Left ventricle myocardium inferior (tissue), 1 donor: ENCODE measurements at regions of chrX and their contacts with region 1.

Region 1: DNA sequence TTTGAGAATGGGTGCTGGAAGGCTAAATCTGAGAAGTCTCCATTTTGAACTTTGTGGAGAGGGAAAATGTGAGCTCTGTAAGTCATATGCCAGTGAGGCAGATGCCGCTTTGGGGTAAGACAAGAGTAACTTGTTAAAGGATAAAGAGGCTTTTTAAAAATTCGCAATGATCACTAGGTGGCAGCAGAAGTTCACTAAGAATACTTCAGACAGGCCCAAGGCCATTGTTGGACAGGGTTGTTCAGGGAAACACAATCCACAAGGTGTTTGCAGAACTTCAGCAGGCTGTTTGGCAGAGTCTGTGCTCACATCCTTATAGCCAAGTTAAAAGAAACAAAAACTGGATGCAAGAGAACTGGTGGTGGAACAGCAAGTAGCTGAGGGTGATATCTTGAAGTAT is 13.7 kb upstream of the PIGA start:
- DNase-seq: no peak
- H3K4me3 ChIP-seq: no peak overlapping the region
- H3K27ac ChIP-seq: peak overlapping the region; percentile 16
- H3K4me1 ChIP-seq: no peaks in the 10 kb centered on the region
- H3K27me3 ChIP-seq: no peaks in the 10 kb centered on the region
- CTCF ChIP-seq: peak; percentile 60

Region 2: GRCh38 chrX:15468036-15468435 is 119.0 kb after region 1 on chrX:
- intact Hi-C with region 1: loop called (anchors 5 kb)
- DNase-seq: no peak
- H3K4me3 ChIP-seq: no peak overlapping the region
- H3K27ac ChIP-seq: peak overlapping the region; percentile 50
- H3K4me1 ChIP-seq: peaks cover 25% of the 10 kb centered on the region
- H3K27me3 ChIP-seq: no peaks in the 10 kb centered on the region
- CTCF ChIP-seq: peak; percentile 51

Region 3: DNA sequence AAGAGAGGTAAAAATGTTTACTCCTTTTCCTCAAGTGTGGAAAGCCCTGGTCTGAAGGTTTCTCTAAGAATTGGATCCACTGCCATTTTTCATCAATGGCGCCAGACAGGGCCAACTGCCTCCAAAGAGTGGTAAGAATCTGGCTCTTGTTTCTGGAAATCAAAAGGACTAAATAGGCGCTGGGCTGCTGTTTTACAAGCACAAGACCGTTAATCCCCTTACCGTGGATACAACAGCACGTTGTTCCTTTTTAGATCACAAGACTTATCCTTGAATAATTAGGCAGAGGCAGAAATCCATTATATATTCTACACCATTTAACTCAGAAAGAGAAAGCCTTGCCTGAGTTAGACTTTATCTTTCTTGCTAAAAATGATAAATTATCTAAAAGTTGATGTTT is 304.9 kb after region 1 on chrX:
- intact Hi-C with region 1: loop called (anchors 10 kb)
- DNase-seq: no peak
- H3K4me3 ChIP-seq: no peak overlapping the region
- H3K27ac ChIP-seq: no peak overlapping the region
- H3K4me1 ChIP-seq: no peaks in the 10 kb centered on the region
- H3K27me3 ChIP-seq: no peaks in the 10 kb centered on the region
- CTCF ChIP-seq: no peak